IMR-90 (cell line): ENCODE measurements at regions of chr2 and their contacts with region 1.

Region 1: DNA sequence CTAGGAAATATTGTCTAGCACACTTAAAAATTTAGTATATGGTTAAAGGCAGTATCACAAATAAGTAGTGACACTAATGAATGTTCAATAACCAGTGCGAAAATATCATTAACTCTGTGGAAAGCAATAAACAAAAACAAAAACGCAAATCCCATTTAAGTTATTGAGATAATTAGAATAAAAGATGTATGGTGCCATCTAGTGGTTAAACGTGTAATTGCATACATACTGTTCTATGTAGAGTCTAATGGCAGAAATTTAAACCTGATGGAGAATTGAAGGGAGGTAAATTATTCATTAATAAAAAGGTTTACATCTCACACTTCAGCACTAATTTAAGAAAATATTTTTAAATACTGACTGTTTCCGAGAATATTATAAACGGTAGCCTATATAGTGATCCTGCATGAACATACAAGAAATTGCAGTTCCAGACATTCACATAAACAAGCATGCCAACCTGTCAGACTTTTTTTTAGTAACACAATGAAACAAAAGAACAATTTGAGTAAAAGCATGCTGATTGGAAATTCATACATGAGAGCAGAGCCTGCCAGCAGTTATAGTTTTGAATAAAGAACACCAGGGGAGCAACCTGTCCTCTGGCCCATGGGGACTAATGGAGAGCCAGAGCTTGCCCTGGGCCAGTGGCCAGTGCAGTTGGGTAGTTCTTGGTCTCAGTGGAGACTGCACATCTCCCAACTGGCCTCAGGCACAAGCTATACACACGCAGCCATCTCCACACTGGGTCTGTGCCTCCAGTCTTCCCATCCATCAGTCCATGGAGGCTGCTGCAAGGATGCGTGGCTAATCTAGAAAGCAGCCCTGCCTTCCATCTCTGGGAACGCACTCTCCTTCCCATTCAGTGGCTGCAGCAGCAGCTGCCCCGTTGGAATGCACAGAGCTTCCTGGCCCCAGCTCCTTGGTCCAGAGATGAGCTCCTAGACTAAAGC is 28.0 kb downstream of the GCG start:
- DNase-seq: peak; percentile 63
- ATAC-seq: peak; percentile 63; the same call in 1 of the 2 replicates
- H3K4me3 ChIP-seq: no peak overlapping the region
- H3K27ac ChIP-seq: no peak overlapping the region
- H3K4me1 ChIP-seq: peaks cover 5% of the 10 kb centered on the region; the same call in 1 of the 2 replicates
- H3K27me3 ChIP-seq: peaks cover 2% of the 10 kb centered on the region; the same call in 1 of the 2 replicates
- CTCF ChIP-seq: peak; percentile 77
- POLR2A ChIP-seq: no peak
- RAD21 ChIP-seq: peak; percentile 77

Region 2: GRCh38 chr2:161426922-161427663 is 697.0 kb before region 1 on chr2:
- CTCF ChIA-PET with region 1: no interaction called
- POLR2A ChIA-PET with region 1: no interaction called
- dilution Hi-C with region 1: no loop called
- in situ Hi-C with region 1: no loop called
- intact Hi-C with region 1: loop called (anchors 10 kb)
- DNase-seq: peak; percentile 43
- ATAC-seq: peak; percentile 57
- H3K4me3 ChIP-seq: peak overlapping the region; percentile 4; the same call in 1 of the 2 replicates
- H3K27ac ChIP-seq: no peak overlapping the region
- H3K4me1 ChIP-seq: no peaks in the 10 kb centered on the region; the same call in 1 of the 2 replicates
- H3K27me3 ChIP-seq: peaks cover 74% of the 10 kb centered on the region
- CTCF ChIP-seq: no peak; the same call in 1 of the 2 replicates
- POLR2A ChIP-seq: no peak
- RAD21 ChIP-seq: 0 out of 2 replicates have a peak, but pooled peaks have one; percentile 10

Region 3: GRCh38 chr2:162007447-162008040 is 116.5 kb before region 1 on chr2:
- CTCF ChIA-PET with region 1: interaction called, 4 read pairs
- POLR2A ChIA-PET with region 1: no interaction called
- dilution Hi-C with region 1: no loop called
- in situ Hi-C with region 1: loop called (anchors 10 kb)
- intact Hi-C with region 1: loop called (anchors 2 kb)
- DNase-seq: peak; percentile 16
- ATAC-seq: no peak
- H3K4me3 ChIP-seq: no peak overlapping the region
- H3K27ac ChIP-seq: no peak overlapping the region
- H3K4me1 ChIP-seq: peaks cover 2% of the 10 kb centered on the region; the same call in 1 of the 2 replicates
- H3K27me3 ChIP-seq: no peaks in the 10 kb centered on the region
- CTCF ChIP-seq: peak; percentile 61
- POLR2A ChIP-seq: no peak
- RAD21 ChIP-seq: peak; percentile 51

Region 4: GRCh38 chr2:162029287-162029901 is 94.7 kb before region 1 on chr2:
- CTCF ChIA-PET with region 1: no interaction called
- POLR2A ChIA-PET with region 1: no interaction called
- dilution Hi-C with region 1: no loop called
- in situ Hi-C with region 1: no loop called
- intact Hi-C with region 1: loop called (anchors 5 kb)
- DNase-seq: peak; percentile 37
- ATAC-seq: no peak
- H3K4me3 ChIP-seq: no peak overlapping the region
- H3K27ac ChIP-seq: no peak overlapping the region
- H3K4me1 ChIP-seq: peaks cover 16% of the 10 kb centered on the region
- H3K27me3 ChIP-seq: no peaks in the 10 kb centered on the region
- CTCF ChIP-seq: no peak
- POLR2A ChIP-seq: no peak
- RAD21 ChIP-seq: no peak